Right cardiac atrium (tissue), 5 donors: ENCODE measurements at regions of chr6 and their contacts with region 1.

Region 1: GRCh38 chr6:46637145-46637544 is 15.5 kb downstream of the CYP39A1 start:
- DNase-seq: no peak
- ATAC-seq: no peak
- H3K4me3 ChIP-seq: no peak overlapping the region
- H3K27ac ChIP-seq: no peak overlapping the region
- H3K4me1 ChIP-seq: no peaks in the 10 kb centered on the region
- H3K27me3 ChIP-seq: no peaks in the 10 kb centered on the region

Region 2: DNA sequence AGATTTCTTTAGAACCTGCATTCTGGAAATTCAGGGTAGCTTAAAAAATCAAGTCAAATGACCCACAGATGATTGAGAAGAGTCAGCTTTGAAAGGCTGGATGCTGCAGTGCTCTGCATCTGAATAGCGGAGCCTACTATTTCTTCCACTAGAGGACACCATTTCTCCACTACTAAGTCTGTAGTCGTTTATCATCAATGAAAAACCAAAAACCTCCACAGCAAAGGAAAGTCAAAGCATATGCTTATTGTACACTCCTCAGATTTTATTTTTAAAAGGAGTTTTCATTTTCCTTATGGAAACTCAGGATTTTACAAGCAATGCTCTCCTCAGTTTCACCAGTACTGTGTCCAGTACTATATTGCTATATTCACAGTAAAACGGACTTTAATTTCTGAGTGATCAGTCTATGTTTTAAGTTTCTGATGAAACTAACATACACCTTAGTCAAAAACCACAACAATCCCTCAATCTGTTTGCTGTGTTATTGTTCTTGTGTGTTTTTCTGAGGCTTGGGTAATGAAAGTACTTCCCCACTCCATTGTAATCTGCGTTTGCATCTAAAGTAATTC is 415.8 kb before region 1 on chr6:
- intact Hi-C with region 1: loop called in 1 of 4 experiments (anchors 10 kb)
- DNase-seq: no peak
- ATAC-seq: peak; percentile 53 to 59
- H3K4me3 ChIP-seq: no peak overlapping the region
- H3K27ac ChIP-seq: no peak overlapping the region
- H3K4me1 ChIP-seq: peaks cover 6% of the 10 kb centered on the region
- H3K27me3 ChIP-seq: no peaks in the 10 kb centered on the region

Region 3: DNA sequence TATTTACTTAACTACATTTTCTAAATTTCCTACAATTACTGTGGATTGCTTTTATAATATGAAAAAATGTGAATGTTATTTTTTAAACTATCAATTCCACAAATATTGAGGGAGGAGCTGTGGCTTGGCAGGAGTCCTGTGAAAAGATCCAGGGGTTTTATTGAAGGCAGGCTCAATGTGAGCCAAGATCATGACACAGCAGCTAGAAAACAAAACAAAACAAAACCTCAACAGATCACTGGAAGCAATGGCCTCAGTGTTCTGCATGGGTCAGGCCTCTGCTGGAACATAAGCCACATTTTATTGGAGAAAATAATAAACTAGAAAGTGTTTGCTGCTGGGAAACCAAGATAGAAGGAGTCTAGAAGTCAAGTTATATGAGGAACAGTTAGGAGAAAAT is 126.5 kb before region 1 on chr6:
- intact Hi-C with region 1: no loop called
- DNase-seq: peak; percentile 15 to 77 (median 56)
- ATAC-seq: peak; percentile 31 to 75
- H3K4me3 ChIP-seq: no peak overlapping the region
- H3K27ac ChIP-seq: peak overlapping the region; percentile 48
- H3K4me1 ChIP-seq: peaks cover 6% of the 10 kb centered on the region
- H3K27me3 ChIP-seq: no peaks in the 10 kb centered on the region

Region 4: GRCh38 chr6:46848684-46849360 is 211.7 kb after region 1 on chr6:
- intact Hi-C with region 1: no loop called
- DNase-seq: peak; percentile 87 to 96 (median 94)
- ATAC-seq: peak; percentile 96
- H3K4me3 ChIP-seq: no peak overlapping the region
- H3K27ac ChIP-seq: no peak overlapping the region
- H3K4me1 ChIP-seq: peaks cover 4% of the 10 kb centered on the region
- H3K27me3 ChIP-seq: no peaks in the 10 kb centered on the region